ENCODE measurements at regions of chr3 and their contacts with region 1.

Region 1: GRCh38 chr3:66253790-66254620 is 33.2 kb downstream of the SLC25A26 start:
- DNase-seq: peak; percentile 62
- ATAC-seq: no peak
- H3K4me3 ChIP-seq: no peak overlapping the region
- H3K4me3 Mint-ChIP-seq: no peak overlapping the region
- H3K27ac ChIP-seq: no peak overlapping the region
- H3K27ac Mint-ChIP-seq: no peak overlapping the region
- H3K4me1 ChIP-seq: peaks cover 12 to 14% of the 10 kb centered on the region in 2 donors
- H3K4me1 Mint-ChIP-seq: peaks cover 20% of the 10 kb centered on the region
- H3K27me3 ChIP-seq: no peaks in the 10 kb centered on the region
- H3K27me3 Mint-ChIP-seq: no peaks in the 10 kb centered on the region
- CTCF ChIP-seq: peak; percentile 98

Region 2: GRCh38 chr3:66270701-66271100 is 16.7 kb after region 1 on chr3:
- CTCF ChIA-PET with region 1: interaction called, 16 read pairs
- POLR2A ChIA-PET with region 1: no interaction called
- intact Hi-C with region 1: no loop called
- DNase-seq: no peak
- ATAC-seq: no peak
- H3K4me3 ChIP-seq: no peak overlapping the region
- H3K4me3 Mint-ChIP-seq: no peak overlapping the region
- H3K27ac ChIP-seq: no peak overlapping the region
- H3K27ac Mint-ChIP-seq: no peak overlapping the region
- H3K4me1 ChIP-seq: peaks cover 17 to 18% of the 10 kb centered on the region in 2 donors
- H3K4me1 Mint-ChIP-seq: peaks cover 25% of the 10 kb centered on the region
- H3K27me3 ChIP-seq: no peaks in the 10 kb centered on the region
- H3K27me3 Mint-ChIP-seq: no peaks in the 10 kb centered on the region
- CTCF ChIP-seq: no peak

Region 3: GRCh38 chr3:66372681-66373350 is 118.8 kb after region 1 on chr3:
- CTCF ChIA-PET with region 1: interaction called, 12 read pairs
- POLR2A ChIA-PET with region 1: no interaction called
- intact Hi-C with region 1: no loop called
- DNase-seq: no peak
- ATAC-seq: peak; percentile 39
- H3K4me3 ChIP-seq: no peak overlapping the region
- H3K4me3 Mint-ChIP-seq: no peak overlapping the region
- H3K27ac ChIP-seq: no peak overlapping the region
- H3K27ac Mint-ChIP-seq: no peak overlapping the region
- H3K4me1 ChIP-seq: no peaks in the 10 kb centered on the region
- H3K4me1 Mint-ChIP-seq: no peaks in the 10 kb centered on the region
- H3K27me3 ChIP-seq: no peaks in the 10 kb centered on the region
- H3K27me3 Mint-ChIP-seq: no peaks in the 10 kb centered on the region
- CTCF ChIP-seq: no peak

Region 4: DNA sequence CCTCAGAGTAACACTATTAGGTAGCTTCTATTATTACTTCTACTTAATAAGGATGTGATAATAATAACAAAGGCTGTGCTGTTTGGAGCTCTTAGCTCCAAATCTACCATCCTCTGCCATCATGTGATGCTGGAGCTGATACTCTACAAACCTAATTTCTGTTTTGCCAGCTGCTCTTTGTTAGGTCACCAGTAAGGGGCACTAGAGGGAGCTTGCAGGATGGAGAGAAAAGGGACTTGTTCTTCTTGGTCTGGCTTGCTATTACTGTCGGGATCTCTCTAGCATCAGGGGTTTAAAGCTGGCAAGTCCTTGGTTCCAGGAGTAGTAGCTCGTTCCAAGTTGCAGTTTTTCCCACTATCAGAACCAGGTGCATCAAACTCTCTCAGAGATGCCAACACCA is 549.2 kb after region 1 on chr3:
- CTCF ChIA-PET with region 1: interaction called, 13 read pairs
- POLR2A ChIA-PET with region 1: no interaction called
- intact Hi-C with region 1: no loop called
- DNase-seq: no peak
- ATAC-seq: no peak
- H3K4me3 ChIP-seq: no peak overlapping the region
- H3K4me3 Mint-ChIP-seq: no peak overlapping the region
- H3K27ac ChIP-seq: no peak overlapping the region
- H3K27ac Mint-ChIP-seq: no peak overlapping the region
- H3K4me1 ChIP-seq: no peaks in the 10 kb centered on the region
- H3K4me1 Mint-ChIP-seq: no peaks in the 10 kb centered on the region
- H3K27me3 ChIP-seq: peaks cover 0 to 6% (median 3%) of the 10 kb centered on the region in 4 experiments
- H3K27me3 Mint-ChIP-seq: peaks cover 28% of the 10 kb centered on the region
- CTCF ChIP-seq: no peak

Region 5: GRCh38 chr3:66822186-66823008 is 568.4 kb after region 1 on chr3:
- CTCF ChIA-PET with region 1: interaction called, 354 read pairs
- POLR2A ChIA-PET with region 1: no interaction called
- intact Hi-C with region 1: loop called (anchors 1 kb)
- DNase-seq: peak; percentile 72
- ATAC-seq: peak; percentile 67
- H3K4me3 ChIP-seq: no peak overlapping the region
- H3K4me3 Mint-ChIP-seq: no peak overlapping the region
- H3K27ac ChIP-seq: no peak overlapping the region
- H3K27ac Mint-ChIP-seq: no peak overlapping the region
- H3K4me1 ChIP-seq: no peaks in the 10 kb centered on the region
- H3K4me1 Mint-ChIP-seq: no peaks in the 10 kb centered on the region
- H3K27me3 ChIP-seq: no peaks in the 10 kb centered on the region
- H3K27me3 Mint-ChIP-seq: peaks cover 10% of the 10 kb centered on the region
- CTCF ChIP-seq: peak; percentile 85

Region 6: GRCh38 chr3:66904831-66905493 is 651.0 kb after region 1 on chr3:
- CTCF ChIA-PET with region 1: no interaction called
- POLR2A ChIA-PET with region 1: no interaction called
- intact Hi-C with region 1: no loop called
- DNase-seq: no peak
- ATAC-seq: no peak
- H3K4me3 ChIP-seq: no peak overlapping the region
- H3K4me3 Mint-ChIP-seq: no peak overlapping the region
- H3K27ac ChIP-seq: no peak overlapping the region
- H3K27ac Mint-ChIP-seq: no peak overlapping the region
- H3K4me1 ChIP-seq: no peaks in the 10 kb centered on the region
- H3K4me1 Mint-ChIP-seq: no peaks in the 10 kb centered on the region
- H3K27me3 ChIP-seq: peaks cover 0 to 2% (median 0%) of the 10 kb centered on the region in 4 experiments
- H3K27me3 Mint-ChIP-seq: peaks cover 18% of the 10 kb centered on the region
- CTCF ChIP-seq: no peak

Measured in B cell (primary cell).